A549 (cell line): ENCODE measurements at regions of chr6 and their contacts with region 1.

Region 1: DNA sequence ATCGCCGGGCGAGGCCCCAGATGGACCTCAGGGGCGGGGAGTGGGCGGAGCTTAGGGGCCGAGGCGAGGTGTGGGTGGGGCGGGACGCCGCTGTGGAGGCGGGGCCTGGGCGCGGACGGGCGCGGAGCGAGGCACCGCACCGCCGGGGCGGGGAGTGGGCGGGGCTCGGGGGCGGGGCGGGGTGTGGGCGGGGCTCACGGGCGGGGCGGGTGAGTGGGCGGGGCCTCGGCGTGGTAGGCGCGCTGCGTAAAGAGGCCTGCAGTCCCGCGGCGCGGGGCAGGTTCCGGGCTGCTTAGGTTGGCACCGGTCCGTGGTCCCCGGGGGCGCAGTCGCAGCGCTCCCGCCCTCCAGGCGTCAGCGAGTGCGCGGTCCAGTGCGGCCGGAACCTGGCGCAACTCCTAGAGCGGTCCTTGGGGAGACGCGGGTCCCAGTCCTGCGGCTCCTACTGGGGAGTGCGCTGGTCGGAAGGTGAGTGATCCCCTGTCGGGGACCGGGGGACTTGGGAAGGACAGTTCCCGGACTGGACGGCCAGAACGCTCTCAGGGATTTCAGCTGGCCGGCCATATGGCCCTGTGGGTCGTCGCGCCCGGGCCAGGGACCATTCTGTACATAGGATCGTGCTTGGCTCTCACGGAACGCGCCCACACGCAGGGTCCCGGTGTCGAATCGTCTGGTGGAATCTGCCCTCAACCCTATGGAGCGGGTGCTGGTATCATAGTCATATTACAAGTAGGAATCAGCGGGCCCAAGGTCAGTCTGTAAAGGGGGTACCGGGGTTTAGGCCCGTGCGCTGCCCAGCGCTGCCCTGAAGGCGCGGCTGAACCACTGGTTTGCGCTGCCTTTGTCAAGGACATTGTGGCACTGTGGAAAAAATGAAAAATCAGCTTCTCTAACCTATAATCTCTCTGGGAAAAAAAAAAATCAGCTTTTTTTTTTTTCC is at the start of gene NQO2:
- DNase-seq: peak; percentile 80 to 84
- ATAC-seq: peak; percentile 75 to 81
- H3K4me3 ChIP-seq: peak within 1 kb of the TSS; percentile 69
- H3K27ac ChIP-seq: peak within 1 kb of the TSS; percentile 90 to 98
- H3K4me1 ChIP-seq: peaks cover 23% of the 10 kb centered on the region
- CTCF ChIP-seq: no peak
- EP300 ChIP-seq: no peak
- POLR2A ChIP-seq: peak; percentile 96
- RAD21 ChIP-seq: no peak
- polyA plus RNA-seq, gene NQO2: 77.0 and 86.5 TPM in 2 replicates

Region 2: DNA sequence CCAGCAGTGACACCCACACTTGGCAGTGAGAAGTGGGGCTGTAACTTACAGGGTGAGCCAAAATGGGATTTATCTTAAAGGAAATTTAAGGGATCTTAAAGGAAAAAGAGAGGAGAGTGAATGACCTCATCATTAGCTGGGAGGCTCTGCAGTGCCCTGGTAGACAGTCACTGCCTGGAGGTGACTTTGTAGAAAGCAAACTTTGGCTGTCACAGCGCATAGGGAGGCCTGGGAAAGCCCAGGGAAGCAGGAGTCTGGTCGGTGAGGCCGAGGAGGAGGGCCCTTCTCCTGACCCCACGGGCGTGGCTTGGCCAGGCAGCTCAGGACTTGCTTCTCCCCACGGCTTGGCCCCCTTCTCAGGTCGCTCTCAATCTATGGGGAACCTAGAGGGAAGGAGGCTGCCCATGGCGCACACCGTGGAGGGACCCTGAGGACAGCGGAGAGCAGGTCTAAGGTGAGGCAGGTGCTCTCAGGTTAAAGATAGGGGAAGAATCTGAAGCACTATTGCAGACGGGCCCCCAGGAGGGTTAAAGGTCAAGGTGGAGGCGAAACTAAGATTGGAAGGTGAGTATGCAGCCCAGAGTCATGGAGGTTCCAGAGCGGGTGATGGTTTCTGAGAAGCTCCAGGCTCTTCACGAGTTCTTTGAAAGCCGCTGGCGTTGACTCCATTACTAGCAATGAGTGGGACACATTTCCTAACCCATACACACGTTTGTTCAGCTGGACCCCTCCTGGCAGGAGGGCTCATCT is 52.8 kb after region 1 on chr6:
- CTCF ChIA-PET with region 1: interaction called, 18 read pairs
- POLR2A ChIA-PET with region 1: interaction called, 18 read pairs
- DNase-seq: no peak
- ATAC-seq: no peak
- H3K4me3 ChIP-seq: peak overlapping the region; percentile 50
- H3K27ac ChIP-seq: peak overlapping the region; percentile 70 to 88; a peak in 4 of 6 replicates
- H3K4me1 ChIP-seq: peaks cover 12% of the 10 kb centered on the region
- CTCF ChIP-seq: no peak
- EP300 ChIP-seq: no peak
- POLR2A ChIP-seq: no peak
- RAD21 ChIP-seq: no peak

Region 3: GRCh38 chr6:3068329-3069214 is 68.7 kb after region 1 on chr6 and contains the start of gene RIPK1:
- CTCF ChIA-PET with region 1: interaction called, 3 read pairs
- POLR2A ChIA-PET with region 1: interaction called, 14 read pairs
- DNase-seq: peak; percentile 83 to 86
- ATAC-seq: peak; percentile 82 to 89
- H3K4me3 ChIP-seq: peak within 1 kb of the TSS; percentile 68
- H3K27ac ChIP-seq: peak within 1 kb of the TSS; percentile 94 to 99
- H3K4me1 ChIP-seq: peaks cover 10% of the 10 kb centered on the region; the same call in 1 of the 3 replicates
- CTCF ChIP-seq: no peak; the same call in 2 of the 3 replicates
- EP300 ChIP-seq: no peak
- POLR2A ChIP-seq: peak; percentile 83
- RAD21 ChIP-seq: peak in 1 of 2 experiments; percentile 21; a peak in 1 of 5 replicates
- polyA plus RNA-seq, gene RIPK1: 13.5 and 14.3 TPM in 2 replicates

Region 4: GRCh38 chr6:3135668-3136297 is 135.9 kb after region 1 on chr6:
- CTCF ChIA-PET with region 1: no interaction called
- POLR2A ChIA-PET with region 1: no interaction called
- DNase-seq: no peak
- ATAC-seq: no peak
- H3K4me3 ChIP-seq: no peak overlapping the region
- H3K27ac ChIP-seq: no peak overlapping the region
- H3K4me1 ChIP-seq: peaks cover 28% of the 10 kb centered on the region
- CTCF ChIP-seq: no peak
- EP300 ChIP-seq: no peak
- POLR2A ChIP-seq: no peak
- RAD21 ChIP-seq: no peak

Region 5: GRCh38 chr6:3176562-3177355 is 176.9 kb after region 1 on chr6:
- CTCF ChIA-PET with region 1: no interaction called
- POLR2A ChIA-PET with region 1: no interaction called
- DNase-seq: peak; percentile 57 to 75
- ATAC-seq: peak; percentile 90 to 96
- H3K4me3 ChIP-seq: no peak overlapping the region
- H3K27ac ChIP-seq: peak overlapping the region in 1 of 2 experiments; percentile 37; a peak in 2 of 6 replicates
- H3K4me1 ChIP-seq: peaks cover 9% of the 10 kb centered on the region; the same call in 2 of the 3 replicates
- CTCF ChIP-seq: no peak
- EP300 ChIP-seq: no peak
- POLR2A ChIP-seq: no peak
- RAD21 ChIP-seq: no peak